Activated B cell treated with CpG ODN at 0.5 μM for 24 hours (primary cell): ENCODE measurements at regions of chr5 and their contacts with region 1.

Region 1: GRCh38 chr5:149434162-149435014 is 55.3 kb upstream of the IL17B start:
- DNase-seq: no peak
- ATAC-seq: no peak
- H3K4me3 Mint-ChIP-seq: no peak overlapping the region
- H3K27ac Mint-ChIP-seq: no peak overlapping the region
- H3K4me1 Mint-ChIP-seq: no peaks in the 10 kb centered on the region
- H3K27me3 Mint-ChIP-seq: peaks cover 19% of the 10 kb centered on the region
- CTCF ChIP-seq: no peak

Region 2: GRCh38 chr5:149317281-149318048 is 116.9 kb before region 1 on chr5:
- CTCF ChIA-PET with region 1: no interaction called
- POLR2A ChIA-PET with region 1: no interaction called
- intact Hi-C with region 1: loop called (anchors 1 kb)
- DNase-seq: no peak
- ATAC-seq: no peak
- H3K4me3 Mint-ChIP-seq: no peak overlapping the region
- H3K27ac Mint-ChIP-seq: no peak overlapping the region
- H3K4me1 Mint-ChIP-seq: no peaks in the 10 kb centered on the region
- H3K27me3 Mint-ChIP-seq: no peaks in the 10 kb centered on the region
- CTCF ChIP-seq: no peak

Region 3: DNA sequence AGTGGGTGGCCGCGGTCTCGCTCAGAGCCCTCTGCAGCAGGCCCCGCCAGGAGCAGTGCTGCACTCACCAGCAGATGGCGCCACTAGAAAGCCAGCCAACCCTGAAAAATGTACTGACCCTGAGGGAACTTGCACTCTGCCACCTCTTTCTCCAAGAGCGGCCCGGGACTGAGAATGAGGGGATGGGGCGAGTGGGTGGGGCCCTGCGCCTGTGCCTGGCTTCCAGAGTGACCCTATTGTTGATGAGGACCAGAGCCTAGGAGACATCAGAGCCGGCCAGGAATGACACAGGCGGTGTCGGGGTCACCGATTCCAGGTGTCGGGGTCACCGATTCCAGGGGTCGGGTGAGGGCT is 52.4 kb before region 1 on chr5:
- CTCF ChIA-PET with region 1: no interaction called
- POLR2A ChIA-PET with region 1: no interaction called
- intact Hi-C with region 1: loop called (anchors 5 kb)
- DNase-seq: peak; percentile 52
- ATAC-seq: peak; percentile 62
- H3K4me3 Mint-ChIP-seq: no peak overlapping the region
- H3K27ac Mint-ChIP-seq: no peak overlapping the region
- H3K4me1 Mint-ChIP-seq: peaks cover 4% of the 10 kb centered on the region
- H3K27me3 Mint-ChIP-seq: peaks cover 9% of the 10 kb centered on the region
- CTCF ChIP-seq: no peak

Region 4: GRCh38 chr5:149422366-149423048 is 11.9 kb before region 1 on chr5:
- CTCF ChIA-PET with region 1: no interaction called
- POLR2A ChIA-PET with region 1: no interaction called
- intact Hi-C with region 1: no loop called
- DNase-seq: no peak
- ATAC-seq: no peak
- H3K4me3 Mint-ChIP-seq: no peak overlapping the region
- H3K27ac Mint-ChIP-seq: no peak overlapping the region
- H3K4me1 Mint-ChIP-seq: no peaks in the 10 kb centered on the region
- H3K27me3 Mint-ChIP-seq: peaks cover 28% of the 10 kb centered on the region
- CTCF ChIP-seq: no peak